HCT116 (cell line): ENCODE measurements at regions of chr1 and their contacts with region 1.

Region 1: GRCh38 chr1:55893155-55893554 is 678.0 kb upstream of the USP24 start:
- DNase-seq: peak; percentile 53
- ATAC-seq: peak; percentile 95
- H3K4me3 ChIP-seq: no peak overlapping the region
- H3K27ac ChIP-seq: no peak overlapping the region
- H3K4me1 ChIP-seq: no peaks in the 10 kb centered on the region
- H3K27me3 ChIP-seq: no peaks in the 10 kb centered on the region
- CTCF ChIP-seq: peak; percentile 47 to 59 (median 55); a peak in 5 of 6 replicates
- POLR2A ChIP-seq: no peak
- RAD21 ChIP-seq: peak; percentile 74

Region 2: DNA sequence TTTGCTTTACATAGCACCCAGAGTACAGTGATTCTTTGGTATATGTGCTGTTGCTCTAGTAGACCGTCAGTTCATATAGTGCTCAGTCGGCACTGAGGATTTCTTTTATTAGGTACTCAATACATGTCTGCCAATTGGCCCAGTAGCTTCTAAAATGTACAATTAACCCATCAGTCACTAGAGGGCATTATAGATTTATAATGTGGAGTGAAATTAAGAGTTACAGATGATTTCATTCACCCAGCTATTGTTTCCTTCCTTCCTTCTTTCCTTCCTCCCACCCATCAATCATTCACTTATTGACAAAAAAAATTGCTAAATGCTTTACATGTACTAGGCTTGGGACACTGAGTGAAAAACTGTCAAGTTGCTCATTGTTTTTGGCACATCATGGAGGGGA is 414.4 kb before region 1 on chr1:
- CTCF ChIA-PET with region 1: interaction called, 8 read pairs
- POLR2A ChIA-PET with region 1: no interaction called
- RAD21 ChIA-PET with region 1: no interaction called
- intact Hi-C with region 1: loop called (anchors 10 kb)
- DNase-seq: peak; percentile 15
- ATAC-seq: peak; percentile 62
- H3K4me3 ChIP-seq: no peak overlapping the region
- H3K27ac ChIP-seq: no peak overlapping the region
- H3K4me1 ChIP-seq: peaks cover 0 to 12% of the 10 kb centered on the region in 2 experiments; a peak in 1 of 4 replicates
- H3K27me3 ChIP-seq: no peaks in the 10 kb centered on the region
- CTCF ChIP-seq: peak in 2 of 3 experiments; percentile 53 to 54; a peak in 3 of 6 replicates
- POLR2A ChIP-seq: no peak
- RAD21 ChIP-seq: peak; percentile 66

Region 3: DNA sequence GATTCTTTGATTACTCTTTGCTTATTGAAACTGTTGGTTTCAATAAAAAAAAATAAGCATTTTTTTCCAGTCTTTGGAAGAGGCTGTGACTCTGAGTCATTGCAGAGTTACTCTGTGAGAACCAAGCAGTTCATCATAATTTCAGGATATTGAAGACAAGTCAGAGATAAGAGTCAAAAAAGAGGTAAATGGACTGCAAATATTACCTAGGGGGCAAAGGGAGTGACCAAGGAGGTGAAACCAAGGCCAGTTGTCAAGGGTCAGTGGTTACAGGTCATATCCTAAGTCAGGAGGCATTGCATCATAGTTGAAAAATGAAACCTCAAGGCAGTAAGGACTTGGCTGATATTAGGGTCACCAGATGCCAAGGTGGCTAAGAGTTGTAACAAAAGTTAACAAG is 80.9 kb before region 1 on chr1:
- CTCF ChIA-PET with region 1: no interaction called
- POLR2A ChIA-PET with region 1: no interaction called
- RAD21 ChIA-PET with region 1: no interaction called
- intact Hi-C with region 1: no loop called
- DNase-seq: no peak
- ATAC-seq: no peak
- H3K4me3 ChIP-seq: no peak overlapping the region
- H3K27ac ChIP-seq: no peak overlapping the region
- H3K4me1 ChIP-seq: no peaks in the 10 kb centered on the region
- H3K27me3 ChIP-seq: no peaks in the 10 kb centered on the region
- CTCF ChIP-seq: no peak
- POLR2A ChIP-seq: no peak
- RAD21 ChIP-seq: no peak